Naive thymus-derived CD8-positive, alpha-beta T cell (primary cell): ENCODE measurements at regions of chr1 and their contacts with region 1.

Region 1: GRCh38 chr1:185281245-185281644 is 35.8 kb downstream of the IVNS1ABP start:
- DNase-seq: peak in 6 of 10 donors; percentile 3 to 74 (median 40)
- ATAC-seq: peak; percentile 89 to 96
- H3K4me3 Mint-ChIP-seq: peak overlapping the region; percentile 57 to 88 (median 74)
- H3K27ac Mint-ChIP-seq: peak overlapping the region; percentile 92 to 100 (median 97)
- H3K4me1 Mint-ChIP-seq: peaks cover 26 to 69% (median 54%) of the 10 kb centered on the region in 4 donors
- H3K27me3 Mint-ChIP-seq: no peaks in the 10 kb centered on the region

Region 2: DNA sequence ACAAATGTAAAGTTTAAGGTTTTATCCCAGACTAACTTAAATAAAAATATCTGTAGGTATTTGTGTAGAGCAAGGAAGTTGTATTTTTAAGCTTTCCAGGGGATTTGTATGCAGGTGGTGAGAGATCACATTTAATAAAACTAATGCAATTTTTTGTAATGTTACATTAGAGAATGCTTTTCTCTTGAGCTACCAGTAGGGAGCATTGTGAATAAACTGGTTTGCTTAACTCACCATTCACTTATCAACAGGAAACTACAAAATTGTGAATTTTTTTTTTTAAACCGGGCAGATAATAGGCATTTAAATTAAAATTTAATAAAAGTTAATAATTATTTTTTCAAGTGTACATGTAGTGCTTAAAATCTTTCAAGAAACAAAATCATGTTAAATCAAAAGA is 42.8 kb before region 1 on chr1:
- POLR2A ChIA-PET with region 1: interaction called, 15 read pairs
- DNase-seq: peak in 3 of 10 donors; percentile 25 to 43 (median 36)
- ATAC-seq: peak; percentile 47 to 65
- H3K4me3 Mint-ChIP-seq: peak overlapping the region in 6 of 10 donors; percentile 10 to 69 (median 32)
- H3K27ac Mint-ChIP-seq: peak overlapping the region in 2 of 10 donors; percentile 4 to 26
- H3K4me1 Mint-ChIP-seq: peaks cover 5 to 30% (median 27%) of the 10 kb centered on the region in 4 donors
- H3K27me3 Mint-ChIP-seq: no peaks in the 10 kb centered on the region

Region 3: DNA sequence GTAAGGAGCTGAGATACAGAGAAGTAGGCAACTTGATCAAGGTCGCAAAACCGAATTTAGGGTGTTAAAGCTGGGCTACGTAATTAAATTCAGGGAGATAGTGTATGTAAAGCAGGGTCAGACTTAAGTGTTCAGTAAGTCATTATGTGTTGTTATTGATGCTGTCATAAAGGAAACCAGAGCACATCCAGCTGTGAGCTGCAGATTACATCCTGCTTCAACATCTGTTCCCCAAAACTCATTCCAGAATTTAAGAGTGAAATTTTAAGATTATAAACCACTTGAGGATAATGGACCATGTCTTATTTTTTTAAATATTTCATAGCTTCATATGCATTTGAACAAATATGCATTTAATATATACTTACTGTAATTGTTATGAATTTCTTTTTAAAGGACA is 13.9 kb before region 1 on chr1:
- POLR2A ChIA-PET with region 1: no interaction called
- DNase-seq: no peak
- ATAC-seq: no peak
- H3K4me3 Mint-ChIP-seq: no peak overlapping the region
- H3K27ac Mint-ChIP-seq: no peak overlapping the region
- H3K4me1 Mint-ChIP-seq: no peaks in the 10 kb centered on the region
- H3K27me3 Mint-ChIP-seq: no peaks in the 10 kb centered on the region

Region 4: DNA sequence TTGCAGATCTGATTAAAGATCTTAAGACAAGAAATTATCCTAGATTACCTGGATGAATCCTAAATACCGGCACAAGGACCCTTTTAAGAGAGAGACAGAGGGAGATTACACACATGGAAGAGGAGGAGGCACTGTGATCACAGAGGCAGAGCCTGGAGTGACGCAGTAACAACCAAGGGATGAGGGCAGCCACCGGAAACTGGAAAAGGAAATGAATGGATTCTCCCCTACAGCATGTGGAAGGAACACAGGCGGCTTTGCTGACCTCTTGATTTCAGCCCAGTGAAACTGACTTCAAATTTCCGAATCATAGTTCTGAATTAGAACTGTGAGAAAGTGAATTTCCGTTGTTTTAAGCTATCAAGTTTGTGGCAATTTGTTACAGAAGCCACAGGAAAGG is 86.0 kb after region 1 on chr1:
- POLR2A ChIA-PET with region 1: no interaction called
- DNase-seq: no peak
- ATAC-seq: no peak
- H3K4me3 Mint-ChIP-seq: no peak overlapping the region
- H3K27ac Mint-ChIP-seq: no peak overlapping the region
- H3K4me1 Mint-ChIP-seq: peaks cover 0 to 4% (median 0%) of the 10 kb centered on the region in 4 donors
- H3K27me3 Mint-ChIP-seq: peaks cover 0 to 2% (median 0%) of the 10 kb centered on the region in 5 donors